ENCODE measurements at regions of chr14 and their contacts with region 1.

Region 1: DNA sequence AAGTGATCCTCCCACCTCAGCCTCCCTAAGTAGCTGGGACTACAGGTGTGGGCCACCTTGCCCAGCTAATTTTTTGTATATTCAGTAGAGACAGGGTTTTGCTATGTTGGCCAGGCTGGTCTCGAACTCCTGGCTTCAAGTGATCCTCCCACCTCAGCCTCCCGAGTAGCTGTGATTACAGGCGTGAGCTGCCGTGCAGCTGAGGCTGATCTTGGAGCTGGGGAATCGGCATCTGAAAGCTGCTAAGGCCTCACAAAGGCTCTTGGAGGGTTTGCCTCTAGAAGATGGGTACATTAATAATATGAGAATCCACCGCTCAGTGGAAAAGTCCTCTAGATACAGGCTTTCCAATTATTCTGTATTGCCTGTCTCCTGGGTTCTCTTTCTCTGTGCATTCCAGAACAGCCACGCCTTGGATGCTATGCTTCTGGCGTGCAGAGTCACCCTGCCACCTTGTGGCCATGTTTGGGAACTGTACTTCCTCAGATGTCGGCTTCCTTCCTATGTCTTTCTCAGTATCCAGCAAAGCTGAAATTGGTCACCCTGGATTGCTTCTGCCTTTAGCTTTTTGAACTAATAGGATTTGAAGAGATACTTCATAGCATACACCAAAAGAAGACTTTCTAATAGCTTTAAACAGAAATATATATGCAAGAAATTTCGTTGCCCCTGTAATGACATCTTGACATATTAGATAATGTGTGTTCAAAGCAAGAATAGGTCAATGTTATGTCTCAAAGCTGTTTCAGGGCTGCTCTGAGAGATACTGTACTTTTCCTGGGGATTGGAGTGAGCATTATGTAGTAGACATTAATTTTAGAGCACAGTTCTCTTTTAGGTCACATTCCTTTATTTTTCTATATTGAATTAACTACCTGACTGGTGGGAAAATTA is 75.4 kb downstream of the SNAPC1 start:
- DNase-seq: peak; percentile 64 to 72 (median 67)
- H3K4me3 ChIP-seq: no peak overlapping the region
- H3K4me3 Mint-ChIP-seq: no peak overlapping the region
- H3K27ac ChIP-seq: no peak overlapping the region
- H3K27ac Mint-ChIP-seq: no peak overlapping the region
- H3K4me1 ChIP-seq: no peaks in the 10 kb centered on the region
- H3K4me1 Mint-ChIP-seq: no peaks in the 10 kb centered on the region
- H3K27me3 ChIP-seq: no peaks in the 10 kb centered on the region
- H3K27me3 Mint-ChIP-seq: peaks cover 1 to 7% of the 10 kb centered on the region in 2 donors

Region 2: GRCh38 chr14:61260939-61261776 is 576.4 kb before region 1 on chr14:
- CTCF ChIA-PET with region 1: interaction called, 18 read pairs
- POLR2A ChIA-PET with region 1: no interaction called
- intact Hi-C with region 1: no loop called
- DNase-seq: no peak
- H3K4me3 ChIP-seq: no peak overlapping the region
- H3K4me3 Mint-ChIP-seq: no peak overlapping the region
- H3K27ac ChIP-seq: no peak overlapping the region
- H3K27ac Mint-ChIP-seq: no peak overlapping the region
- H3K4me1 ChIP-seq: no peaks in the 10 kb centered on the region
- H3K4me1 Mint-ChIP-seq: no peaks in the 10 kb centered on the region
- H3K27me3 ChIP-seq: peaks cover 15% of the 10 kb centered on the region
- H3K27me3 Mint-ChIP-seq: peaks cover 14 to 21% of the 10 kb centered on the region in 2 donors

Region 3: GRCh38 chr14:61280526-61281185 is 556.9 kb before region 1 on chr14:
- CTCF ChIA-PET with region 1: interaction called, 17 read pairs
- POLR2A ChIA-PET with region 1: no interaction called
- intact Hi-C with region 1: no loop called
- DNase-seq: peak; percentile 73 to 81 (median 78)
- H3K4me3 ChIP-seq: peak overlapping the region; percentile 45 to 76
- H3K4me3 Mint-ChIP-seq: peak overlapping the region; percentile 90 to 95 (median 93)
- H3K27ac ChIP-seq: peak overlapping the region; percentile 65
- H3K27ac Mint-ChIP-seq: peak overlapping the region; percentile 87 to 96 (median 94)
- H3K4me1 ChIP-seq: peaks cover 16% of the 10 kb centered on the region
- H3K4me1 Mint-ChIP-seq: peaks cover 19 to 38% (median 24%) of the 10 kb centered on the region in 4 donors
- H3K27me3 ChIP-seq: no peaks in the 10 kb centered on the region
- H3K27me3 Mint-ChIP-seq: no peaks in the 10 kb centered on the region

Region 4: DNA sequence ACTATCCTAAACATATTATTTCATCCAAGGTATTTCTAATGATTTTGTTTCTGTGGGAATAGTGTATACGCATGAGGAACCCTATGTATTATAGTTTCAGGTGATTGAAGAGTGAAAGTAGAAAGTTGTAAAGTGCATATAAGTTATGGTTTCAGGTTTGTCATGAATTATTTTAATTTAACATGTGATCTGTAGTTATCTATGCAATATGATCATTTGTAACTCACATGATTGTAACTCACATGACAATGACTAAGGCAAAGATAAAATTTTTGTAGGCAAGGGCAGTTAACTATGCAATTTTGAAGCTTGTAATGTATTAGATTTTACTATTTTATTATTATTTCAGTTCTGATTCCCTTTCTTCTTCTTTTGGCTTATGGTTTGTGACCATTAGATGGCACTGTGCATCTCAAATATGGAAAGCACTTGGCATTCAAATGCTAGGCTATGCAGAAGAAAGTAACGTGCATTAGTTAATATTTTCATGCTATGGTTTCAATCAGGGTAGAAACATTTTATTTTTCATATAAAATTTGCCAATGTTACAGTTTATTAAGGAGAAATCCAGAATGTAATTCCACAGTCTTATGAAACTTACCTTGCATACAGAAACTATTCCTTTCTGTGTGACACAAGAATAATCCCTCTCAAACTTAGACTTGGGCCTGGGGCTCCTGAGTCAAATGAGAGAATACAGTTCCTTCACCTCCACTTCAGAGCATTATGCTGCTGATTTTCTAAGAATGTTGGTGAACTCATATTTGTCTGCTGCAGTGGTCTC is 540.7 kb before region 1 on chr14:
- CTCF ChIA-PET with region 1: interaction called, 29 read pairs
- POLR2A ChIA-PET with region 1: no interaction called
- intact Hi-C with region 1: loop called (anchors 1 kb)
- DNase-seq: peak; percentile 41 to 67 (median 59)
- H3K4me3 ChIP-seq: no peak overlapping the region
- H3K4me3 Mint-ChIP-seq: no peak overlapping the region
- H3K27ac ChIP-seq: no peak overlapping the region
- H3K27ac Mint-ChIP-seq: peak overlapping the region in 2 of 7 donors; percentile 43 to 79
- H3K4me1 ChIP-seq: peaks cover 21% of the 10 kb centered on the region
- H3K4me1 Mint-ChIP-seq: peaks cover 27 to 47% (median 38%) of the 10 kb centered on the region in 4 donors
- H3K27me3 ChIP-seq: no peaks in the 10 kb centered on the region
- H3K27me3 Mint-ChIP-seq: no peaks in the 10 kb centered on the region

Region 5: DNA sequence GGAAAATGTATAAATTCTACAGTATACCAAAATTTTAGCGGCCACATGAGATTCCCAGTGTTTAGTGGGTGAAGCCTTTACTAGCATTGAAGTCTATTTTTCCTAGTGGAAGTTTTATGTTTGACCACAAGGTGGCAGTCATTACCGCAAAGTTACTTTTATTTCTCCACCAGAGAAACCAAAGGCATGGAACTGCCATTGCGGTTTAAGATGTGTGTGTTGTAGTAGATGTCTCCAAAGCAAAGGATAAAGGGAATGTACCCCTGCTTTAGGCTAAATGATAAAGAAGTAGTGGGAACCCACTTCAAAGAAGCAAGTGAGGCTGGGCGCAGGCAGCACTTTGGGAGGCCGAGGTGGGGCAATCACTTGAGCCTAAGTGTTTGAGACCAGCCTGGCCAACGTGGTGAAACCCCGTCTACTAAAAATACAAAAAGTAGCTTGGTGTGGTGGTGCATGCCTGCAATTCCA is 375.7 kb before region 1 on chr14:
- CTCF ChIA-PET with region 1: interaction called, 60 read pairs
- POLR2A ChIA-PET with region 1: interaction called, 4 read pairs
- intact Hi-C with region 1: loop called (anchors 1 kb)
- DNase-seq: peak; percentile 58 to 71 (median 69)
- H3K4me3 ChIP-seq: no peak overlapping the region
- H3K4me3 Mint-ChIP-seq: peak overlapping the region in 5 of 8 donors; percentile 21 to 51 (median 47)
- H3K27ac ChIP-seq: peak overlapping the region; percentile 22
- H3K27ac Mint-ChIP-seq: peak overlapping the region; percentile 88 to 97 (median 92)
- H3K4me1 ChIP-seq: peaks cover 46% of the 10 kb centered on the region
- H3K4me1 Mint-ChIP-seq: peaks cover 47 to 77% (median 60%) of the 10 kb centered on the region in 4 donors
- H3K27me3 ChIP-seq: no peaks in the 10 kb centered on the region
- H3K27me3 Mint-ChIP-seq: no peaks in the 10 kb centered on the region

Region 6: DNA sequence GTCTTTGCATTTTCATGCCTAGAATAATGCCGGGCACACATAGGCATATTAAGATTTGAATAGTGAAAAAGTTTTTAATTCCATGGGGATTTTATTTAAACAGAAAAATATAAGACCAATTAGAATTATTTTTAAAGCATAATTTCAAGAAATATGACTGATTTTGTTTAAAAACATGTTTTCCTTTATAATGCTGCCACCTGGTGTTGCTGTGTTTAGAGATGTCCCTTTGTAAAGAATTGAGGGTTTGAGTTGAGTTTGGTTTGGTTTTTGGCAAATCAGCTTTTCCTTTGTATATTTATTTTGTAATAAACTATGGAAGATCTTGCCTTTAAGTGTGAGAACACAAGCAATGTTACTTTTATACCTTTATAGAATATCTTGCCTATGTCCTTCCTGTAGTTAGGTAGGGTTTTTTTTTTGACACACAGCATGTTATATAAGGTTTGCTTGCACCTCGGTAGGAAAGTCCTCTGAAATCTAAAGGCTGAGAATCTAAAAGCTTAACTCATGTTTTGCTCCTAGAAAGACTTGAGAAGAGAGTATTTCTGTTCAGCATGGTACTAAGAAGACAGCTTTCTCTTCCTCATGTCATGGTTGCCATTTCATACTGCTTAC is 106.7 kb before region 1 on chr14:
- CTCF ChIA-PET with region 1: interaction called, 16 read pairs
- POLR2A ChIA-PET with region 1: no interaction called
- intact Hi-C with region 1: loop called (anchors 1 kb)
- DNase-seq: peak in 4 of 5 donors; percentile 30 to 34 (median 30)
- H3K4me3 ChIP-seq: no peak overlapping the region
- H3K4me3 Mint-ChIP-seq: no peak overlapping the region
- H3K27ac ChIP-seq: no peak overlapping the region
- H3K27ac Mint-ChIP-seq: peak overlapping the region in 6 of 7 donors; percentile 2 to 83 (median 52)
- H3K4me1 ChIP-seq: peaks cover 5% of the 10 kb centered on the region
- H3K4me1 Mint-ChIP-seq: peaks cover 10 to 16% (median 12%) of the 10 kb centered on the region in 4 donors
- H3K27me3 ChIP-seq: no peaks in the 10 kb centered on the region
- H3K27me3 Mint-ChIP-seq: no peaks in the 10 kb centered on the region

Region 7: DNA sequence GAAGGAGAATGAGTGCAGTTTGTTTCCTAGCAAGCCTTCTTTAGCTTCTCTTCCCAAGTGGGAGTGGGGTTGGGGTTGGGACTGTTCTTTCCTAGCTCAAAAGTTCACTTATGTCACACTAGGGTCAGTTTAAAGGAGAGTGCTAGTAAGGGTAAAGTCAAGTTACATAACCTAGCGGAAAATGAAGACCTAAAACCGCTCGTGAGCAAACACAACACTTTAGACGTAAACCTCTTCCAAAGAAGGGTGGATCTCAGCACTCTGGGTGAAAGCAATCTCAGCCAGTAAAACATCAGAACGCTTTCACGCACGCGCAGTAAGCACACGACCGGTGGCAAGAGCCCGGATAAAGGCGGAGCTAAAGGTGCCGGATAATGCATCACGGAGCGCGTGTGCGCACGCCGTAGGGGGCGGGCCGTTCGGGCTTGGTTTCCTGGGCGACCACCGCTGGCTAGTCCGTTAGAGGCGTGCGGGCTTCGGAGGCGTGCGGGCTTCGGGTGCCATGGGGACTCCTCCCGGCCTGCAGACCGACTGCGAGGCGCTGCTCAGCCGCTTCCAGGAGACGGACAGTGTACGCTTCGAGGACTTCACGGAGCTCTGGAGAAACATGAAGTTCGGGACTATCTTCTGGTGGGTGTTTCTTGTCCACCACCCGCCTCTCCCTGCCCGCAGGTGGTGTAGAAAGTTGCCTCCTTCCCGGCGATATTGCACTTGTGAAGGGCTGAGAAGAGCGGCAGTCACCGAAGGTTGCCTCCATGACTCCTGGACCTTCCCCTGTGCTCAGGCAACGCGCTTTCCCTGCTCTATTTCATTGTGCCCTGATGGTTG is 75.4 kb before region 1 on chr14 and contains the start of gene SNAPC1:
- CTCF ChIA-PET with region 1: interaction called, 8 read pairs
- POLR2A ChIA-PET with region 1: no interaction called
- intact Hi-C with region 1: loop called (anchors 2 kb)
- DNase-seq: peak; percentile 96 to 98 (median 97)
- H3K4me3 ChIP-seq: peak within 1 kb of the TSS; percentile 80 to 85
- H3K4me3 Mint-ChIP-seq: peak within 1 kb of the TSS; percentile 96 to 100 (median 99)
- H3K27ac ChIP-seq: peak within 1 kb of the TSS; percentile 90
- H3K27ac Mint-ChIP-seq: peak within 1 kb of the TSS; percentile 99 to 100 (median 100)
- H3K4me1 ChIP-seq: peaks cover 38% of the 10 kb centered on the region
- H3K4me1 Mint-ChIP-seq: peaks cover 25 to 54% (median 31%) of the 10 kb centered on the region in 4 donors
- H3K27me3 ChIP-seq: no peaks in the 10 kb centered on the region
- H3K27me3 Mint-ChIP-seq: no peaks in the 10 kb centered on the region
- total RNA-seq, gene SNAPC1: 4.0 to 4.2 TPM

Measured in CD4-positive, alpha-beta memory T cell (primary cell).